GM12878 (cell line): ENCODE measurements at regions of chr19 and their contacts with region 1.

Region 1: DNA sequence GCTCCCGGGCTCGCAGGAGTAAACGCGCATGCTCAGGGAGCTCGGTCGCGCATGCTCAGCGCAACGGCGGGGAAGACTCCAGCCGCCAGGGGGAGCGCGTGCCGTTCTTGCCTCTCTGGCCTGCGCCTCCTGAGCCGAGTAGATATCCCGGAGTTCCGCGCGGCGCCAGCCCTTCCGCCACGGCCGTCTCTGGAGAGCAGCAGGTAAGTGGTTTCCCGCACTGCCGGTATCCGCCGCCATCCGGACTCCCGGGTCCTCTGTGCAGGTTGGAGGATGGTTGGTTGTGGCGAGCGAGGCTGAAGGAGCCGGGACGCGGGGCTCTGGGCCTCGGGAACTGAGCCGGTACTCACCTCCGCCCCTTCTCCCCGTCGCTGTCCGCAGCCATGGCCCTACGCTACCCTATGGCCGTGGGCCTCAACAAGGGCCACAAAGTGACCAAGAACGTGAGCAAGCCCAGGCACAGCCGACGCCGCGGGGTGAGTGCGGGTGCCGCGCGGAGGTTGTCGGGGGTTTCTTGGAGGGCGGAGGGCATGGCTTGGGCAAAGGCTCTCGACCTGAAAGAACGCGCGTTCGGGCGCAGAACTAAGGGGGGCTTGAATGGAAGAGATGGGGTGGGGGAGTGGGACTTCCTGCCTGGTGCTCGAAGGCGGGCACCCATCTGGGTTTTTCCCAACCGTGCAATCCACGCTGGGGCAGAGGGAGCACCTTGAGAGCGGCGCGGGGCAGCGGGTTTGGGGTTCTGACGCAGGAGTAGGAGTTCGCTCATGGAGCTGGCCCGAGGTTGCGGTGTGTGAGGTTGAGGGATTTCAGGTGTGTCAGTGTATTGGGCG is at the start of gene RPL36:
- DNase-seq: peak; percentile 94
- ATAC-seq: peak; percentile 65
- H3K4me3 ChIP-seq: peak within 1 kb of the TSS; percentile 94
- H3K27ac ChIP-seq: peak within 1 kb of the TSS; percentile 94
- H3K4me1 ChIP-seq: peaks cover 8% of the 10 kb centered on the region
- H3K27me3 ChIP-seq: no peaks in the 10 kb centered on the region
- CTCF ChIP-seq: peak; percentile 98 to 99 (median 99); a peak in 5 of 6 replicates
- EP300 ChIP-seq: no peak
- POLR2A ChIP-seq: peak; percentile 100
- RAD21 ChIP-seq: no peak
- polyA plus RNA-seq, gene RPL36: 4,698 to 4,942 TPM

Region 2: GRCh38 chr19:4246767-4247593 is 1443.4 kb before region 1 on chr19 and contains the start of gene YJU2:
- CTCF ChIA-PET with region 1: no interaction called
- POLR2A ChIA-PET with region 1: no interaction called
- RAD21 ChIA-PET with region 1: no interaction called
- SMC1A ChIA-PET with region 1: no interaction called
- in situ Hi-C with region 1: loop called (anchors 10 kb)
- intact Hi-C with region 1: no loop called
- DNase-seq: peak; percentile 94
- ATAC-seq: peak; percentile 98
- H3K4me3 ChIP-seq: peak within 1 kb of the TSS; percentile 74
- H3K27ac ChIP-seq: peak within 1 kb of the TSS; percentile 100
- H3K4me1 ChIP-seq: peaks cover 11% of the 10 kb centered on the region
- H3K27me3 ChIP-seq: no peaks in the 10 kb centered on the region
- CTCF ChIP-seq: peak; percentile 44 to 54 (median 44)
- EP300 ChIP-seq: no peak; a peak in 1 of 4 replicates
- POLR2A ChIP-seq: peak; percentile 77
- RAD21 ChIP-seq: peak; percentile 47
- polyA plus RNA-seq, gene YJU2: 0.26 to 1.9 TPM

Region 3: DNA sequence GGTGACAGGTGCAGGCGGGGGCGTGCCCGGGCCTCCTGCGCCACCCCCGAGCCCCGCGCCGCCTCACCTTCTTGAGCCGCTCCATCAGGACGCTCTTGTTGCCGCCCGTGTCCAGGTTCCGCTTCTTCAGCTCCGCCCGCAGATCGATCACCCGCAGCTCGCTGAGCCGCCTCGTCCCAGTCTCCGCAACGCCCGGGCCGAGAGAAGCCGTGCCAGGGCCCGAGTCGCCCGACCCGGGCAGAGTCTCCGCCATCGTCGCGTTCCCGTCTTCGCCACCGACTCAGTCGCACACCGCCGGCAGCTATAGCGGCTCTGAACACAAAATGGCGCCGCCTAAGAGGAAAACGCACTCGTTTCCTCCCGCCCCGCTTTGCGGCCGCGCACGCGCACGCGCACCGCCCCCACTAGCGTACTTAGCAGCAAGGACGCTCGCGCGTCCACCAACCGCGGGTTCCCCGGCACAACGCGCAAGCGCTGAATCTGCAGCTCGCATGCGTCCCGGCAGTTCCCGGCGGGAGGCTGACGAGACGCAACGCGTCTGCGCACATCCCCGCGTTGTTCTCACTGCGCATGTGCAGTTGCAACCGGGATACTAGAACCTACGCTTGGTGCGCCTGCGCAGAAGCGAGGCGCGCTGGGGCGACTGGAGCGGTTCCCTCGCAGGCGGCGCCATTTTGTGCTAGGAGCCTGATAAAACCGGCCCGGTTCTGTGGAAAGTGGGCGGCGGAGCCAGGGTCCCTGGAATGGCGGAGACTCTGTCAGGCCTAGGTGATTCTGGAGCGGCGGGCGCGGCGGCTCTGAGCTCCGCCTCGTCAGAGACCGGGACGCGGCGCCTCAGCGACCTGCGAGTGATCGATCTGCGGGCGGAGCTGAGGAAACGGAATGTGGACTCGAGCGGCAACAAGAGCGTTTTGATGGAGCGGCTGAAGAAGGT is 67.6 kb before region 1 on chr19 and contains the starts of genes SAFB and SAFB2:
- CTCF ChIA-PET with region 1: interaction called, 35 read pairs
- POLR2A ChIA-PET with region 1: interaction called, 11 read pairs
- RAD21 ChIA-PET with region 1: interaction called, 12 read pairs
- SMC1A ChIA-PET with region 1: interaction called, 4 read pairs
- in situ Hi-C with region 1: no loop called
- intact Hi-C with region 1: loop called (anchors 5 kb)
- DNase-seq: peak; percentile 99
- ATAC-seq: peak; percentile 88
- H3K4me3 ChIP-seq: peak within 1 kb of the TSS; percentile 99
- H3K27ac ChIP-seq: peak within 1 kb of the TSS; percentile 89
- H3K4me1 ChIP-seq: peaks cover 18% of the 10 kb centered on the region
- H3K27me3 ChIP-seq: no peaks in the 10 kb centered on the region
- CTCF ChIP-seq: no peak
- EP300 ChIP-seq: no peak
- POLR2A ChIP-seq: peak; percentile 97
- RAD21 ChIP-seq: no peak
- polyA plus RNA-seq, gene SAFB: 1.6 to 2.9 TPM
- polyA plus RNA-seq, gene SAFB2: 4.5 to 24.6 TPM

Region 4: DNA sequence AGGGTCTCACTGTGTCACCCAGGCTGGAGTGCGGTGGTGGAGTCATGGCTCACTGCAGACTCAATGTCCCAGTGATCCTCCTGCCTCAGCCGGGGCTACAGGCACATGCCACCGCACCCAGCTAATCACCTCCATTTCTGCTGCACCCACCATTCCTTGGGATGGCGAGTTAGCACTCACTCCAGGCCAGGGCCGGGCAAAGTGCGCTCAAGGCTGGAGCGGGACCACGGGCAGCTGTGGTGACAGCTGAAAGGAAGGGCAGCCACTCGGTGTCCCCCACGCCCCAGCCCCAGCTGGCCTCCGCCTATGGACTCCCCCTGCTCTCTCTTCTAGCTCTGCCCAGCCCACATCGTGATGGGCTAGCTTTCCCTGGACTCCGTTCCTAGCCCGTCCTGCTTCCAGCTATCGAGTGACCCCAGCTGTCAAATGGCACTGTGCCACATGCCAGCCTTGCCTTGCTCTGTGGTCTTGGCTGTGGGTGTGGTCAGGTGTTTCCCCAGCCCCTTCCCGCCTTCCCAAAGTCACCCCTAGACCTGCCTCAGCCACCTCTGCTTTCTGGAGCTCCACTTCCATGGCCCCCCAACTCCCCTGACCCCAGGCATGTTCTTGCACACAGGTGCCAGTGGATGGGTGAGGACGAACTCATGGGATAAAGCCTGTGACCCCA is 14.1 kb before region 1 on chr19:
- CTCF ChIA-PET with region 1: interaction called, 12 read pairs
- POLR2A ChIA-PET with region 1: interaction called, 4 read pairs
- RAD21 ChIA-PET with region 1: no interaction called
- SMC1A ChIA-PET with region 1: interaction called, 4 read pairs
- in situ Hi-C with region 1: no loop called
- intact Hi-C with region 1: no loop called
- DNase-seq: no peak
- ATAC-seq: no peak
- H3K4me3 ChIP-seq: no peak overlapping the region
- H3K27ac ChIP-seq: no peak overlapping the region
- H3K4me1 ChIP-seq: peaks cover 3% of the 10 kb centered on the region; the same call in 1 of the 2 replicates
- H3K27me3 ChIP-seq: no peaks in the 10 kb centered on the region
- CTCF ChIP-seq: no peak
- EP300 ChIP-seq: no peak
- POLR2A ChIP-seq: no peak; the same call in none of the 2 replicates
- RAD21 ChIP-seq: no peak

Region 5: DNA sequence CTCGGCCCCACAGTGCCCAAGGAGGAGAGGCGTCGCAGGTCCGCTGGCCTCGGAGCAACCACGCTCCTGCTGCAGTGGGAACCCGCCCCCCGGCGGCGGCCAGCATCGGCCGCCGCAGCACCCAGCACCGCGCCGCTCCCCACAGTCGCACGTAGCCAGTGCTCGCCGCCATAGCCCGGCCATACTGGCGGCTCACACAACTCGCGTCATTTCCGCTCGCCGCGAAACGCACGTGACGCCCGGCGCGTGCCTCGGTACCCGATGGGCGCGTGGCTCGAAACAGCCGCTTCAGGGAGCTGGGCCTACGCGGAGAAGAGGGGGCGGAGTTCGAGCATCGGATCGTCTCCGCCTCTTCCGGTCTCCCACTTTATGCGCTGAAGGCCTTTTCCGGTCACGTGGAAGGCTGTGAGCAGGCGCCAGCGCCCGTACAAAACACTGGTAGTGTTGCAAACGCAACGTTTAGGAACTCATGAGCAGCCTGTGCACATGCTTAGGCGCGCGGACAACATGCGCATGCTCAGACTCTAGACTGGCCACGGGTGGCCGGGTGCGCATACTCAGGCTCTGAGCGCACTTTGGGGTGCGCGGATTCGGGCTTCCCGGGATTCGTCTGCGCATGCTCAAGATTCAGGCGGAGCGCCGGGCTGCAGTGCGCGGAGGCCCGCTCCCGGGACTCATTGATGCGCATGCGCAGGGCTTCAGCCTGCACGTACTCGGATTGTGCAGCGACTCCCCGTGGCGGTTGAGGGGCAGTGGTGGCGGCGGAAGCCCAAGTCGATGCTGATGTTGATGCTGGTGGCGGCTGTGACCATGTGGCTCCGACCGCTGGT is 29.8 kb after region 1 on chr19 and contains the starts of genes CATSPERD and LONP1:
- CTCF ChIA-PET with region 1: interaction called, 74 read pairs
- POLR2A ChIA-PET with region 1: interaction called, 14 read pairs
- RAD21 ChIA-PET with region 1: interaction called, 7 read pairs
- SMC1A ChIA-PET with region 1: interaction called, 5 read pairs
- in situ Hi-C with region 1: no loop called
- intact Hi-C with region 1: loop called (anchors 2 kb)
- DNase-seq: peak; percentile 95
- ATAC-seq: peak; percentile 94
- H3K4me3 ChIP-seq: peak within 1 kb of the TSS; percentile 98
- H3K27ac ChIP-seq: peak within 1 kb of the TSS; percentile 91
- H3K4me1 ChIP-seq: peaks cover 4% of the 10 kb centered on the region
- H3K27me3 ChIP-seq: no peaks in the 10 kb centered on the region
- CTCF ChIP-seq: peak; percentile 96 to 99 (median 97)
- EP300 ChIP-seq: no peak; a peak in 1 of 4 replicates
- POLR2A ChIP-seq: peak; percentile 90
- RAD21 ChIP-seq: peak; percentile 22; the same call in 1 of the 2 replicates
- polyA plus RNA-seq, gene CATSPERD: 0.02 TPM in 1 of 2 experiments, not detected in the other
- polyA plus RNA-seq, gene LONP1: 0.61 to 3.2 TPM

Region 6: GRCh38 chr19:5790573-5791520 is 100.5 kb after region 1 on chr19 and contains the start of gene DUS3L:
- CTCF ChIA-PET with region 1: interaction called, 9 read pairs
- POLR2A ChIA-PET with region 1: no interaction called
- RAD21 ChIA-PET with region 1: no interaction called
- SMC1A ChIA-PET with region 1: interaction called, 4 read pairs
- in situ Hi-C with region 1: no loop called
- intact Hi-C with region 1: loop called (anchors 2 kb)
- DNase-seq: peak; percentile 98
- ATAC-seq: peak; percentile 99
- H3K4me3 ChIP-seq: peak within 1 kb of the TSS; percentile 71
- H3K27ac ChIP-seq: peak within 1 kb of the TSS; percentile 92
- H3K4me1 ChIP-seq: peaks cover 3% of the 10 kb centered on the region; the same call in 1 of the 2 replicates
- H3K27me3 ChIP-seq: no peaks in the 10 kb centered on the region
- CTCF ChIP-seq: no peak
- EP300 ChIP-seq: no peak
- POLR2A ChIP-seq: peak; percentile 93
- RAD21 ChIP-seq: no peak
- polyA plus RNA-seq, gene DUS3L: 0.64 to 1.5 TPM